Panc1 (cell line): ENCODE measurements at regions of chr1 and their contacts with region 1.

Region 1: GRCh38 chr1:17460245-17460644 is 20.8 kb upstream of the RCC2 start:
- DNase-seq: no peak
- ATAC-seq: peak; percentile 70
- H3K4me3 ChIP-seq: no peak overlapping the region
- H3K27ac ChIP-seq: no peak overlapping the region
- H3K4me1 ChIP-seq: peaks cover 4% of the 10 kb centered on the region; the same call in 1 of the 2 replicates
- H3K27me3 ChIP-seq: no peaks in the 10 kb centered on the region
- CTCF ChIP-seq: no peak

Region 2: GRCh38 chr1:16293538-16293937 is 1166.7 kb before region 1 on chr1:
- CTCF ChIA-PET with region 1: no interaction called
- POLR2A ChIA-PET with region 1: no interaction called
- in situ Hi-C with region 1: no loop called
- intact Hi-C with region 1: no loop called
- DNase-seq: no peak
- ATAC-seq: no peak
- H3K4me3 ChIP-seq: no peak overlapping the region
- H3K27ac ChIP-seq: no peak overlapping the region
- H3K4me1 ChIP-seq: no peaks in the 10 kb centered on the region
- H3K27me3 ChIP-seq: no peaks in the 10 kb centered on the region
- CTCF ChIP-seq: no peak

Region 3: DNA sequence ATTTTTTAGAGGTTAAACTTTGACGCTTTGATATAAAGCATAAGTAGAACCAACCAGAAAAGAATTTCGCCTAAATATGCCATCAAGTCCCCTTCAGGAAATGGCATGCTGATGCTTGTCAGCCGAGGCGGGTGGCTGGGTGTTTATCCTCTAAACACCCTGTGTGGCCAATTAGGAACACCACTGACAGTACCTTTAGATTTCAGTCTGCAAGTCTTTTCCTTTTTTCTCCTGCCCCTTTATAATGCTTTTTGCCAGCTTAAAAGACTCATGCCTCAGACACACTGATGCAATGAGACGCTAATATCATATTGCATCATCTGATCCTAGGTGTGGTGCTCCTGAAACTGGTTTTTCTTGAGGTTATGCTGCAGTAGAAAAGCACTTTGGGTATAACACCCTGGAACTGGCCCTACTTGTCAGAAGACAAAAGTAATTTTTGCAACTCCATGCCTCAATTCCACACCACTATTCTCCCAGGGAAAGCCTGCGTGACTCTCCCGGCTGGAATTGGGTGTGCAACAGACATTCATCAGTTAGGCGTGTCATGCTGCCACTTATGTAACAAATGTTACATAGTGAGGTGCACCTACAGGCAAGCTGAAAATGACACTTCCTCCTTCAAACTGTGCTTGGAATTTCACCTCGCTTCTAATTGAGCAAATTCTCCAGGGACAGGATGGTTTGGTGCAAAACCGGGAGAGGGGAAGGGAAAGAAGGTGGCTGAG is 18.8 kb before region 1 on chr1:
- CTCF ChIA-PET with region 1: interaction called, 12 read pairs
- POLR2A ChIA-PET with region 1: no interaction called
- in situ Hi-C with region 1: no loop called
- intact Hi-C with region 1: no loop called
- DNase-seq: peak; percentile 63
- ATAC-seq: no peak
- H3K4me3 ChIP-seq: peak overlapping the region in 1 of 2 experiments; percentile 67; a peak in 2 of 4 replicates
- H3K27ac ChIP-seq: peak overlapping the region; percentile 93; the same call in 1 of the 2 replicates
- H3K4me1 ChIP-seq: peaks cover 22% of the 10 kb centered on the region
- H3K27me3 ChIP-seq: no peaks in the 10 kb centered on the region
- CTCF ChIP-seq: no peak

Region 4: DNA sequence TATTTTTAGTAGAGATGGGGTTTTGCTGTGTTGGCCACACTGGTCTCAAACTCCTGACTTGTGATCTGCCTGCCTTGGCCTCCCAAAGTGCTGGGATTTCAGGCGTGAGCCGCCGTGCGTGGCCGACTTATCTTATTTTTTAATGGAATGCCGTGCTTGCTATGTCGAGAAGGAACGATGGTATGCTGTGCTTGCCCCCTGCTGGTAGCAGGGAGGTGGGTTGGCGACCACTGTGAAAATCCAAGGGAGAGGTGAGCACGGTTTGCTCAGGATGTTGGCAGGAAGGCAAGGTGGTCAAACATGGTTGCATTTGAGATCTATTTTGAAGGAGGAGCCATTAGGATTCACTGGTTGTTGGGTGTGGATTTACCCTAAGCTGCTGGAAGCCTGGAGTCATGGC is 25.0 kb after region 1 on chr1:
- CTCF ChIA-PET with region 1: no interaction called
- POLR2A ChIA-PET with region 1: interaction called, 11 read pairs
- in situ Hi-C with region 1: no loop called
- intact Hi-C with region 1: no loop called
- DNase-seq: no peak
- ATAC-seq: peak; percentile 55; the same call in 1 of the 2 replicates
- H3K4me3 ChIP-seq: no peak overlapping the region
- H3K27ac ChIP-seq: no peak overlapping the region
- H3K4me1 ChIP-seq: no peaks in the 10 kb centered on the region
- H3K27me3 ChIP-seq: no peaks in the 10 kb centered on the region
- CTCF ChIP-seq: peak; percentile 77

Region 5: DNA sequence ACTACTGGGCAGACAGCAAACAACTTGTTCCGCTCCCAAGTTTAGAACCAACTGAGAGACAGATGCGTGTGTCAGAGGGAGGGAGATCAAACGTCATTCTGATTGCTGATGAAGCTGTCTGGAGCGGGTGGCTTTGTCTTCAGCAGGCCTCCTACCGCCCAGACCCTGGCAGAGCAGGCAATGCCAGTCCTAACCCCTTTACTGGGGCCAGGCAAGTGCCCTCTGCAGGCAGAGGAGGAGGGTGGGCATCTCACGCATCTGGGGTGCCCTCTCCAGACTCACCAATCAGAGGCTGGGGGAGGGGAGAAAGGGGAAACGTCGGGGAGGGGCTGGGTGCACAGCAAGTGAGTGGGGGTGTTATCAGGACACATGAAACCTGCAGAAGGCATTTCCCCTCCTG is 421.5 kb after region 1 on chr1:
- CTCF ChIA-PET with region 1: no interaction called
- POLR2A ChIA-PET with region 1: no interaction called
- in situ Hi-C with region 1: no loop called
- intact Hi-C with region 1: no loop called
- DNase-seq: no peak
- ATAC-seq: no peak
- H3K4me3 ChIP-seq: no peak overlapping the region
- H3K27ac ChIP-seq: no peak overlapping the region
- H3K4me1 ChIP-seq: no peaks in the 10 kb centered on the region
- H3K27me3 ChIP-seq: no peaks in the 10 kb centered on the region; the same call in 1 of the 2 replicates
- CTCF ChIP-seq: no peak